ENCODE measurements at regions of chr12 and their contacts with region 1.

Region 1: GRCh38 chr12:125183187-125184067 is 118.2 kb downstream of the AACS start:
- DNase-seq: peak; percentile 86
- ATAC-seq: peak; percentile 66

Region 2: GRCh38 chr12:125092872-125093680 is 90.4 kb before region 1 on chr12:
- intact Hi-C with region 1: loop called (anchors 5 kb)
- DNase-seq: no peak
- ATAC-seq: peak; percentile 83

Region 3: GRCh38 chr12:125140279-125141209 is 42.9 kb before region 1 on chr12:
- intact Hi-C with region 1: no loop called
- DNase-seq: no peak
- ATAC-seq: no peak

Region 4: GRCh38 chr12:125262851-125263250 is 79.4 kb after region 1 on chr12:
- intact Hi-C with region 1: no loop called
- DNase-seq: no peak
- ATAC-seq: no peak

Region 5: GRCh38 chr12:125330645-125331341 is 147.4 kb after region 1 on chr12:
- intact Hi-C with region 1: loop called (anchors 5 kb)
- DNase-seq: peak; percentile 79
- ATAC-seq: peak; percentile 89

Region 6: DNA sequence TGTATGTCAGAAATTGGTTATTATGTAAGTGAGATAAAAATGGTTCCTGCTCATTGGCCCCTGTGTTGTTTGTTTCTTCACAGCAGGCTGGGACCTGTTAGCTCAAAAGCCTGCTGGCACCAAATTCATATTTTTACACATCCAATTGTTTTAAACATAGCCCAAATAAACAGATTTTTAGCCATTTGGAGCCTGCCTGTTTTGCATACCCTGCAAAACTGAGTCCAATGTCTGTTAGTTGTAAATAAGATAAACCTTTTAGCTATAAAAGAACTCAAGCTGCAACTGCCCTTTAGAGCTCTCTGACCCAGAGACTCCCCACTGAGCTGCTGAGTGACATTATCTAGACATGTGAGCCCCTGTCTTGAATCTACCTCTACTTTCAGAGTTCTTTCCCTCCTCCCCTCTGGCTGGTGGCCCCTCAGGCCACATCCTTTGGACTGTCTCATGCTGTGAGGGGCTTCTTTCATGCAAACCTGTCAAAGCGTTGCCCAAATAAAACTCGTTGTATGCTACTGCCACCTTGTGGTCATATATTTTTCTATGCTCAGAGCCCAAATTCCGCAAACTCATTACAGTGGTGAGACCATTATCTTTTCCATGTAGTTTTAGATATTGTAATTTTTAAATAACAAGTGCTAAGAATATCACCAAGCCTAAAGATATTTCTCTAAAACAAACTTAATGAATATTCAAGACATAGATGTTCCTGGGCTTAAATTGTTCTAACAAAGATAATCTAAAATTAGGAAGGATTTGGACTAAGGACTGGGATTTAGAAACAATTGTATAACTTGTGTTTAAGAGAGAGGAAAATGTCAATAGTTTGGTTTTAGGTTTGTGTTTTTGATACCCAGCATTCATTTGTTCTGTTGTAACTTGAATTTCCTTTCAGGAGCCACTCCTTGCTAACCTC is 219.7 kb after region 1 on chr12:
- intact Hi-C with region 1: loop called (anchors 5 kb)
- DNase-seq: no peak
- ATAC-seq: no peak

Region 7: GRCh38 chr12:126747530-126748149 is 1564.2 kb after region 1 on chr12:
- intact Hi-C with region 1: loop called (anchors 5 kb)
- DNase-seq: peak; percentile 60
- ATAC-seq: no peak

Region 8: DNA sequence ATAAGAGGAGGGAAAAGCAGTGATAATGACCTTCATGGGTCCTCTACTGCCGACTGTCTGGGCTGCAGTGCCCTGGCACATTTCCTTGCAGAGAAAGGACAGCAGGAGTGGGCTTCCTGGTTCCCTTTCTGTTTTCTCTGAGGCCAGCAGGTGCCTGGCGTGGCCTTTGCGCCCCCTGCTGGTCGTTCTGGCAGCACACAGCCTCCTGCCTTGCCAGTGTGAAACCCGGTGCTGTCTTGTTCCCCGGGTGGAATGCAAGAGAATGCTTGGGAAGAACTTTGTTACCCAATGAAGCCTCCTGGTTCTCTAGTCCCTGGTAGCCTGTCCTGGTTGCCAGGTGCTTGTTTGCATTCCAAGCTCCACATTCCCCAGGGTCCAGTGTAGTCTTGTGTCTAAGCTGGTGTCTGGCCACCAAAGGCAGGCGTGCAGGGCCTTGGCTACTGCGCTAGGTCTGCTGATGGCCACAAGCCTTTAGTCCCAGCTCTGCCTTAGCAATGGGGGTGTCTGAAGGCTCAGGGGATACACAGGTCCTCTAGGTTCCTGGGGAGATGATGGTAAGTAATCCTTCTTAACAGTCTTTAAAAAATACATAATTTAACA is 1691.1 kb after region 1 on chr12:
- intact Hi-C with region 1: loop called (anchors 5 kb)
- DNase-seq: peak; percentile 74
- ATAC-seq: no peak